Right ventricle myocardium inferior (tissue), 1 donor: ENCODE measurements at regions of chr16 and their contacts with region 1.

Region 1: DNA sequence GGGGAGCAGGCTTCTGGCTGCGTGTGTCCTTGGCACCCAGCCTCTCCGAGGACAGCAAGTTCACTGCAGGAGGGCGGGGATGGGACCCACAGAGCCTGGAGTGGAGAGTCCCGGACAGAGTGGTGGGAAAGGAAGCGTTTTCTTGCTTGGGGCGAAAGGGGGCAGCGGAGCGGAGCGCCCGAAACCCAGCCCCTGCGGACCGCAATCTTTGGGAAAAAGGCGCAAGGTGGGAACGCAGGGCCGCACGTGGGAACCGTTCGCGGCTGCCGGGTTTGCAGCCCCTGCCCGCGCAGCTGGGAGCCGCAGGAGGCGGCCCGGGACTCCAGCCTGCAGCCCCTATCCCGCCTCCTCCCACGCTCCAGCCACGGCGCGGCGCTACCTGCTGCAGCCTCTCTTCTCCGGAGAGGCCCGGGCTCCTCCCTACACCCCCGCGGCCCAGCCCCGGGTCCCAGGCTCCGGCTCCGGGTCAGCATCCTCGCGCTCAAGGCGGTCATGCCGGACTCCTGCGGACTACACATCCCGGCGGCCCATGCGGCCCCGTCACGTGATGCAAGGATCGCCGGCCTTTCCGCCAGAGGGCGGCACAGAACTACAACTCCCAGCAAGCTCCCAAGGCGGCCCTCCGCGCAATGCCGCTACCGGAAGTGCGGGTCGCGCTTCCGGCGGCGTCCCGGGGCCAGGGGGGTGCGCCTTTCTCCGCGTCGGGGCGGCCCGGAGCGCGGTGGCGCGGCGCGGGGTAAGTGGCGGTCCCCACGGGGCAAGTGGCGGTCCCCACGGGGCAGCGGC is at the starts of genes NTHL1 and TSC2:
- DNase-seq: peak; percentile 99
- ATAC-seq: peak; percentile 96
- total RNA-seq, gene NTHL1: 23.3 TPM
- total RNA-seq, gene TSC2: 62.8 TPM

Region 2: GRCh38 chr16:2033057-2033908 is 14.2 kb before region 1 on chr16:
- intact Hi-C with region 1: loop called (anchors 2 kb)
- DNase-seq: peak; percentile 80
- ATAC-seq: peak; percentile 62

Region 3: DNA sequence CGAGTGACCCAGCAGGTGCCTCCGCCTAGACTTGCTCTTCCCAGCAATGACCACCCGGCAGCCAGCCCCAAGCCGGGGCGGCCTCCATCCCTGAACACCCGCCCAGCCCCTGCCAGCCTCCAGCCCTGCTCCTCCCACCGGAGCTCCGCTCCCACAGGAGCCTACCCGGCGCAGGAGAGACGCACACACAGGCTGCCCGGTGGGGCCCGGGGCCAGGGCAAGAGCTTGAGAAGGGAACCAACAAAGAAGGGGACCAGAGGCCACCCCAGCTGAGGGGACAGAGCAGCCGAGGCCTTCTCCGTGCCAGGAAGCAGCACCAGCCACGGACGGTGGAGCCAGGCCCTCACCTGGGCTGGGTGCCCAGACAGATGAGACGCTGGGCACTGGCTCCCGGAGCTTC is 74.3 kb after region 1 on chr16:
- intact Hi-C with region 1: loop called (anchors 5 kb)
- DNase-seq: no peak
- ATAC-seq: peak; percentile 26

Region 4: DNA sequence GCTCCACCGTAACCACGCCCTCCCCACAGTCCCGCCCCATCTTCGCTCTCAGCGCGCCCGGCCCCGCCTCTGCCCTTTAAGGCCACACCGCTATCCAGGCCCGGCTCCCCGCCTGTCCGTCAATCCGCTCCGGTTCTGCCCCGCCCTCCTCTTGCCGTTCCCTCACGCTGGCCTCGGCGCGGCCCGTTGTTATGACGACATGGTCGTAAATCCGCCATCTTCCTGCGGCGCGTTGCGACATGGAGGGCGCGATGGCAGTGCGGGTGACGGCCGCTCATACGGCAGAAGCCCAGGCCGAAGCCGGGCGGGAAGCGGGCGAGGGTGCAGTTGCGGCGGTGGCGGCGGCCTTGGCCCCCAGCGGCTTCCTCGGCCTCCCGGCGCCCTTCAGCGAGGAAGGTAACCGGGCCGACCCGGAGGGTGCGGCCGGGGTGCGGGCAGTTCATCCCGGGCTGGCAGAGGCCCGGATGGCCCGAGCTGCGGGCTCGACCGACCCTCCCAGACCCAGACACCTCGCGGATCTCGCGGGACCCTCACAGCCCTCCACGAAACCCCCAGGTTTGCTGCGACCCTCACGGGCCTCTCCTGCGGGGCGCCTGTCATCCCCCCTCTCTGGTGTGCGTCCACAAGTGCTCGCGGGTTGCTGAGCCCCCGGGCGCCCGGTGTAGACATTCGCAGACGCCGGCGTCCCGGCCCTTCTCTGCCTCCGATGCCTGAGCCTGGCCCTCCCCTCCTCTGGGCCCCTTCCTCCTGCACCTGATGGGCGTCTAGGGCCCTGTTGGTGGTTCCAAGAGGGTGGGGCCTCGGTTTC is 176.1 kb after region 1 on chr16 and contains the start of gene E4F1:
- intact Hi-C with region 1: no loop called
- DNase-seq: peak; percentile 100
- ATAC-seq: peak; percentile 100
- total RNA-seq, gene E4F1: 14.1 TPM